ENCODE measurements at regions of chr3 and their contacts with region 1.

Region 1: GRCh38 chr3:71397046-71397445 is 186.5 kb downstream of the FOXP1 start:
- DNase-seq: peak; percentile 54
- H3K4me3 ChIP-seq: no peak overlapping the region
- H3K27ac ChIP-seq: no peak overlapping the region
- H3K4me1 ChIP-seq: peaks cover 19% of the 10 kb centered on the region
- H3K27me3 ChIP-seq: no peaks in the 10 kb centered on the region
- CTCF ChIP-seq: peak; percentile 39 to 40
- POLR2A ChIP-seq: no peak

Region 2: DNA sequence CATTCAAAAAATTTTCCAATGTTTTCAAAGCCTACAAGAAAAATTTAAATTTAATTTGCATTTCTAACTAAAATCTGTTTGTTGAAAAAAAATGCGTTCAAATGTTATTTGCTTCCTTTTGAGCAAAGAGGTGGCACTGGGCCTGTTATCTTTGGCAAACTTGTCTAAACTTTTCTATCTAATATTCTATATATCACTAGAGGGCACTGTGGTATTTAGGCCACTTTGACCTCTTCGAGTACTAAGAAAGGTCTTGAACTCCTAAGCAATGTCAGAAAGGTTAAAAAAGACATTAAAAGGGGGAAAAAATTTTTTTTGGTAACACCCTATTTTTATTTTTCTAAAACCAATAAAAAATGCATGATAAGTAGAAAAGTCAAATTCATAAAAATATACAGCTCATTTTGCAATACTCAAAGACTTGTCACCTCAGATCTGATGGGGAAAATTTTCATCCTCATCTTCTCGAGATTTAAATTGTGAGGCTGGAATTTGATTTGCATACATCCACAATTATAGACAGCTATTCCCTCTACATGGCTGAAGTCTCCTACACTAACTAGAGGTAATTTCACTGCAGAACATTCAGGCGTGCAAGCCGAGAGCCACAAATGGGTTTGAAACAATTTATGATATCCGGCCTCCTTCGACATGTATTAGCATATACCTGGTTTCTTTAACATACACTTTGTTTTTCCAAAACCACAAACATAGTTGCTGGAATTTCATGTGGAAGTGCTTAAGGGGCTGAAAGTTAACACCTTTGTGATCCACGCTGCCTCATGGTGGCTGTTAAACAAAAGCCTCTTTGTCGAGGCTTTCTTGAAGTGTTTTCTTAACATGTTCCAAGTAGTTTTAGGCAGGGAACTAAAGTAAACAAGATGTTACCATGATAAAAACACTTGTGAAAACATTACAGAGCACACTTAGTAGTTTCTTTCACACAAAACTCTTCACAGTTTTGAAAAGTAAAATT is 389.9 kb before region 1 on chr3:
- CTCF ChIA-PET with region 1: interaction called, 4 read pairs
- POLR2A ChIA-PET with region 1: no interaction called
- dilution Hi-C with region 1: no loop called
- intact Hi-C with region 1: loop called (anchors 10 kb)
- DNase-seq: peak; percentile 75
- H3K4me3 ChIP-seq: no peak overlapping the region
- H3K27ac ChIP-seq: peak overlapping the region; percentile 53
- H3K4me1 ChIP-seq: peaks cover 54% of the 10 kb centered on the region
- H3K27me3 ChIP-seq: no peaks in the 10 kb centered on the region
- CTCF ChIP-seq: peak in 1 of 2 donors; percentile 15
- POLR2A ChIP-seq: no peak

Region 3: DNA sequence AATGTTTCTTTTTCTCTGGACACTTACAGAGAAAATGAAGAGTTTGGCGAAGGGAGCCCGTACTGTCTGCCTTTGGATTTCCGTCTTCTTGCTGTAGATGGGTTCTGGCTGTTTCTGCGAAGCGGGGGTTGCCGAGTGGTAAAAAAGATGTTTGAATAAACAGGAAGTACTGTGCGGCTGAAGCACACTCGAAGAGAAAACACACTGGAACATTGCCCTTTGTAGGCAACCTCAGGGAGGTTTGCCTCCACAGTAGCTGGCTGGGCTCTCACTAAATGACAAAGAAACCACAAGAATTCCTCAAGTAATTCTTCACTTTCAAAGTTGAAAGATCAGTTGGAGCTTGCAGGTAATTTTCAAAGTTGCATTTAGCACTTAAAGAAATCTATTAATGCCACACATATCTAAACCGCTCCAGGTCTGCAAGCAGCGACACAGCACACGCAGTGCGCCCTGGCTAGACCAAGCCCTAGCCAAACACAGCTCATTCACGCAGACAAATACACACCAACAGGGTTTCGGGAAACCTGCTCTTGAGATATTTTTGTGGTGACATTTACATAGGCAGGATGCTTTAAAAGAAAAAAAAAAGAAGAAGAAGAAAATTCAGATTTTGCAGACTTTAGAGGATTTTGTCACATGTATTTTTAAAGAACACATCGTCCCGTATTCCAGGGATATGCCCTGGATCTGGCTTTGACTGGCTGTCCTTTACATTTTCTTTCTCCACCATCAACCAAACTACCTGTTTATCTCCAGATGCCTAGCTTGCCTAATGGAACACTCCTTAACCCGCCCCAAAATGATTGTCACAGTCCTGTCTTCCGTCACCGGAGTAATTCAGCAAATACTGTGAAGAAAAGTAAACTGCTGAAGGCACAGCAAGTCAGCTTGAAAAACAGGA is 266.3 kb before region 1 on chr3:
- CTCF ChIA-PET with region 1: interaction called, 5 read pairs
- POLR2A ChIA-PET with region 1: no interaction called
- dilution Hi-C with region 1: no loop called
- intact Hi-C with region 1: loop called (anchors 10 kb)
- DNase-seq: peak; percentile 84
- H3K4me3 ChIP-seq: peak overlapping the region; percentile 24 to 91 (median 87)
- H3K27ac ChIP-seq: peak overlapping the region; percentile 93
- H3K4me1 ChIP-seq: peaks cover 24% of the 10 kb centered on the region
- H3K27me3 ChIP-seq: no peaks in the 10 kb centered on the region
- CTCF ChIP-seq: no peak
- POLR2A ChIP-seq: no peak

Region 4: DNA sequence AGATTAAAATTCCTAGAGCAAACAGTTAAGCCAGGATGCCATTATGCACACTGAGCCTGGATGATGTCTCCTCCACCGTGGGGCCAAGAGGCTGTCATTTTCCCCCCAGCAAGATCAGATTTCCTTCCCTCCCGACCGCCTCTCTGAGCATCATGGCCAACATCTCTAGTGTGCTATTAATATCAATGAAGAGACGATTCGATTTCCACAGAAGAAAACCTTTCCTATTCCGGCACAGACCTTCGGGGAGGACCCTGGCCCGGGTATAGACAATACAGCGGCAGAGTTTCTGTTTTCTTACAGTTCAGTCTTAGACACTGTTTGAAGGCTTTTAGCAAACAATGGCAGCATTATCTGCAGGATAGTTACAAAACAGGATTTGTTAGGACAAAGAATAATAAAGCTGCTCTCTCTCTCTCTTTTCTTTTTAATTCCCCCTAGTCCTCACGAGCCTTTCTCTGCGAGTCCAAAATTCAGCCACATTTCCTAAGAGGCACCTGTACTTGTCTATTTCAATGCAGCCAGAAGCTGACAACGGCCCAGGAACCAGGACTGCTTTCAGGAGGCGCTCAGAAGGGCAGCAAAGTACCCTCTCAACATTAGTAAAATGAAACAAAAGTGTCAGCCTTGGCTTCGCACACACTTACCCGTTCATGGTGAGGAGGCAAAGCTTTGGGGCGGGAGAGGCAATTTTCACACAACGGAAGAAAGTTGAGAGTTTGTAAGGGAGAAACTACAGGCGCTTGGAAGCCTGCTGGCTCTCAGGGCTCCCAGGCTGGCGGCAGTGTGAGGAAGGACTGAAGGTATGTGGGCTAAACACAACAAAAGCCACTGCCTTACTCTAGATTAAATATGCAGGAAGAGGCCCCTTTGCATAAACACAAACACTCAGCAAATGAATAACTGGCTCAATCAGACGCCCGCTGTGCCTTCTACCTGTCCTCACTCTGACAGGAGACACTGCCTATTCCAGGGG is 91.5 kb before region 1 on chr3:
- CTCF ChIA-PET with region 1: interaction called, 20 read pairs
- POLR2A ChIA-PET with region 1: no interaction called
- dilution Hi-C with region 1: no loop called
- intact Hi-C with region 1: loop called (anchors 5 kb)
- DNase-seq: peak; percentile 71
- H3K4me3 ChIP-seq: peak overlapping the region; percentile 24 to 60 (median 41)
- H3K27ac ChIP-seq: peak overlapping the region; percentile 19
- H3K4me1 ChIP-seq: peaks cover 24% of the 10 kb centered on the region
- H3K27me3 ChIP-seq: no peaks in the 10 kb centered on the region
- CTCF ChIP-seq: no peak
- POLR2A ChIP-seq: no peak

Region 5: GRCh38 chr3:71372911-71373637 is 24.0 kb before region 1 on chr3:
- CTCF ChIA-PET with region 1: interaction called, 18 read pairs
- POLR2A ChIA-PET with region 1: no interaction called
- dilution Hi-C with region 1: no loop called
- intact Hi-C with region 1: no loop called
- DNase-seq: no peak
- H3K4me3 ChIP-seq: no peak overlapping the region
- H3K27ac ChIP-seq: no peak overlapping the region
- H3K4me1 ChIP-seq: no peaks in the 10 kb centered on the region
- H3K27me3 ChIP-seq: no peaks in the 10 kb centered on the region
- CTCF ChIP-seq: no peak
- POLR2A ChIP-seq: no peak